ENCODE measurements at regions of chr7 and their contacts with region 1.

Region 1: DNA sequence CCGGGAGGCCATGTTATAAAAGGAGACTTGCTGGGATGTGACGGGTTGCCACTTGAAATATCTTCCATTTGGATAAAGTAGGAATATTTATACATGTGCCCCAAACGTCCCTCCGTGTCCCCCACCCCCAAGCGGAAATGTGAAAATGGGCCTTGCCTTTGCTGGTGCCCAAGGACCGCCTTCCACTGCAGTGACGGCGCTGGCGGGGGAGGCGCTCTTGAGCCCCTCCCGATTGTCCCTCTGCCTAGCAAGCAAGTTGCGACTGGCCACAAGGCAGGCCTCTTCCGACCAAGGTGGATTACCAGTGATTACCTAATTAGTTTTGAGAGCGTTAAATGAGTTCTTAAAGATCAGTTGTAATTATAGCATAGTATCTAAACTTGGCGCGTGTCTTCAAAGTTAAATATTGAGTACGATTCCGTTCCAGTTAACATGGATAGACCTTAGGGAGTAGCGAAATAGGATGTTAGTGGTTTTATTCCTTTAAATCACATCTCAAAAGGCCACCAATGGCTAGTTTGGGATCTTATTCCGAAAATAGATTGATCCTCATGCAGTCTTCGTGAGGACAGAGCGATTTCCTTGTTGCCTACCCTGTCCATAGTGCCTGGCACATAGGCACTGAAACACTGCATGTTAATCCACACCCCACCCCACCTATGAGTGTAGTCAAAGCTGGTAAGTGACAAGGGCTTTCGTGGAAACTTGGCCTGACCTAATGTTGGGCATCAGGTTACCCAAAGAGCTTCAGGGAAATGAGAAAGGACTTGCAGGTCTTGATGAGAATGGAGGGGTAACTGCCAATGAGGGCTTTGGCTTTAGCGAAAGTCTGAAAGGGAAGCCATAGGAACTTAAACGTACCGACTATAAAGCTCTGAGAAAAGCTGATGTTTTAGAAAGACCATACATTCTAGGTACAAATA is 1.1 kb downstream of the PPIA start:
- DNase-seq: peak; percentile 81
- H3K4me3 Mint-ChIP-seq: peak overlapping the region; percentile 94
- H3K27ac Mint-ChIP-seq: peak overlapping the region; percentile 94
- H3K4me1 Mint-ChIP-seq: peaks cover 34% of the 10 kb centered on the region
- H3K27me3 Mint-ChIP-seq: no peaks in the 10 kb centered on the region

Region 2: GRCh38 chr7:44123190-44124003 is 674.2 kb before region 1 on chr7 and contains the start of gene POLD2:
- intact Hi-C with region 1: loop called (anchors 2 kb)
- DNase-seq: peak; percentile 98
- H3K4me3 Mint-ChIP-seq: peak within 1 kb of the TSS; percentile 96
- H3K27ac Mint-ChIP-seq: peak within 1 kb of the TSS; percentile 90
- H3K4me1 Mint-ChIP-seq: peaks cover 31% of the 10 kb centered on the region
- H3K27me3 Mint-ChIP-seq: peaks cover 7% of the 10 kb centered on the region
- total RNA-seq, gene POLD2: 234 and 250 TPM in 2 replicates

Region 3: DNA sequence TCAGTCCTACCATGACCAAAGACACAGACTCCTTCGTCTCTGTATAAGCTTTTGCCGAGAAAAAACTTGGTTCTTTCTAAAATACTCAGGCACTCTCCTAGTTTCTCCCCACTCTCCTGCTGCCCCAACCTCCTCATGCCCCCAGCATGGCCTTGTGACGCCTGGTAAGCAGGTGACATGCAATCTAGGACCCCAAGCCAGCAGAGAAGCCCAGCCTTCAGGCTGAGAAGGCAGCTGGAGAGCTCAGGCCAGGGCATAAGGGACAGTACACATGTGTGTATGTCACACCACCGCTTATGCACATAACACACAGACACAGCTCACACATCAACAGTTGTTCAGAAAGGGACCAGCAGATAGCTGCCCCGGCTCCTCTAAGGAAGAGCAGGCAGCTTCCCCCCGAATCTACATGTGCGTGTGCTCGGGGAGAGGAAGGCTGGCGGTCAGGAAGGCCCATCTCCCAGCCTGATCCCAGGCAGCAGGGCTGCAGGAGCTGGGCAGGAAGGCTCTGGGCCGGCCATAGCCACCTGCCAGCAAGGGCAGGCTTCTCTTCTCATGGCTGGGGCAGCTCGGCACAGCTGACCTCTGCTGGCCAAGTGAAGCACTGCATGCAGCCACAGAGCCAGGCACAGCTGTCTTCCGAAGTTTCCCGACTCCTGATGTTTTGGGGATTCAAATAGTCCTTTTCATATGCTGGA is 232.3 kb before region 1 on chr7:
- intact Hi-C with region 1: no loop called
- DNase-seq: peak; percentile 45
- H3K4me3 Mint-ChIP-seq: no peak overlapping the region
- H3K27ac Mint-ChIP-seq: no peak overlapping the region
- H3K4me1 Mint-ChIP-seq: no peaks in the 10 kb centered on the region
- H3K27me3 Mint-ChIP-seq: no peaks in the 10 kb centered on the region

Region 4: DNA sequence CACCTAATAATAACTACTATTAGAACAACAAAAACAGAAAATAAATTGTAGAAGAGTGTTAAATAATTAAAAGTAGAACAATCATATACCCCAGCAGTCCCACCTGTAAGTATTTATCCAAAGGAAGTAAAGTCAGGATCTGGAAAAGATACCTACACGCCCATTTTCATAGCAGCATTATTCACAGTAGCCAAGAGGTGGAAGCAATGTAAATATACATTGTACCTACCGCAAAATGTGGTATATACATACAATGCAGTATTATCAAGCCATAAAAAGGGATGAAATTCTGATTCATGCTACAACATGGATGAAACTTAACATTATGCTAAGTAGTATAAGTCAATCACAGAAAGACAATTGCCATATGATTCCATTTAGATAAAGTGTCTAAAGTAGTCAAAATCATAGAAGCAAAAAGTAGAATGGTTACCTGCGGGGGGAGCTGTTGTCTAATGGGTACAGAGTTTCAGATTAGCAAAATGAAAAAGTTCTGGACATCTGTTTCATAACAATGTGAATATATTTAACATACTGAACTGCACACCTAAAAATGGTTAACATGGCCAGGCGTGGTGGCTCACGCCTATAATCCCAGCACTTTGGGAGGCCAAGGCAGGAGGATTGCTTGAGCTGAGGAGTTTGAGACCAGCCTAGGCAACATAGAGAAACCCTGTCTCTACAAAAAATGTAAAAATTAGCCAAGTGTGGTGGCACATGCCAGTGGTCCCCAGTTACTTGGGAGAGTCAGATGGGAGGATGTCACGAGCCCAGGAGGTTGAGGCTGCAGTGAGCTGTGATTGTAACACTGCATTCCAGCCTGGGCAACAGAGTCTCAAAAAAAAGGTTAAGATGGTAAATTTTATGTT is 209.5 kb before region 1 on chr7:
- intact Hi-C with region 1: loop called (anchors 1 kb)
- DNase-seq: peak; percentile 42
- H3K4me3 Mint-ChIP-seq: no peak overlapping the region
- H3K27ac Mint-ChIP-seq: no peak overlapping the region
- H3K4me1 Mint-ChIP-seq: peaks cover 10% of the 10 kb centered on the region
- H3K27me3 Mint-ChIP-seq: peaks cover 3% of the 10 kb centered on the region

Region 5: DNA sequence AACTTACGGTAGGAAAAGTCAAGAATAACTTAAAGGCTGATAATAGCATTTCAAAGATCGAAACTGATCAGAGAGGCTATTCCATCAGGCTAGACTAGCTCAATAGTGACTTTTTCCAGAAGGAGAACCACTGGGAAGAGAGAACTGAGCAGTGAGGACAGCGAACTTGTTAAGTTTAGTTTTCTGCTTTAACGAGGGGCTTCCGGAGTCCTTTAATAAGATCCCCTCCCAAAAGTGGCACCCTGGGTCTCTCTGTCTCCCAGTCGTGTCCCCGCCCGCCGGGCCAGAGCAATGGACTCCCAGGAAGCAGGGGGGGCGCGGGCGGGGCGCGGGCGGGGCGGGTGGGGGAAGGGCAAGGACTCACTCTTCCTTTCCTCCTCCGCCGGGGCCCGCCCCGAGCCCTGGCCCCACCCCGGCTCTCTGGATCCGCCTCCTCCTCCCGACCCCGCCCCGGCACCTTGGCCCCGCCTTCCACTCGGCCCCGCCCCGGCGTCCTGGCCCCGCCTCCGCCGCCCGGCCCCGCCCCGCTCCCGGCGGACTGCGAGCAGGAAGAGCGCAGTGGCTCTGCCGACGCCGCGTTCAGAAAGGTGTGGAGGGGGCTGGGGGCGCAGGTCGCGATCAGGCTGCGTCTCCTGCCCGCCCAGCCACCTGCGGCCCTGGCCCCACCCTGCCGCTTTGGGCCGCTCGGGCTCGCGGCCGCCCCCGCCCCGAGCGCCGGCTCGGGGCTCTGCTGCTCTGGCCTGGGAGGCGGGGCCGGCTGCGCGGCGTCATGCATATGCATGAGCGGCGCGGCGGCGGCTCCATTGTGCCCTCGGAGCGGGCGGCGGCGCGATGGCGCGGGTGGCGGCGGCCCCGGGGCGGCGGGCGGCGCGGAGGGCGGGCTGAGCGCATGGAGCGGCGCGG is 49.3 kb before region 1 on chr7 and contains the start of gene ZMIZ2:
- intact Hi-C with region 1: loop called (anchors 1 kb)
- DNase-seq: peak; percentile 88
- H3K4me3 Mint-ChIP-seq: peak within 1 kb of the TSS; percentile 92
- H3K27ac Mint-ChIP-seq: peak within 1 kb of the TSS; percentile 95
- H3K4me1 Mint-ChIP-seq: peaks cover 45% of the 10 kb centered on the region
- H3K27me3 Mint-ChIP-seq: no peaks in the 10 kb centered on the region
- total RNA-seq, gene ZMIZ2: 123 and 129 TPM in 2 replicates

Region 6: GRCh38 chr7:44811086-44811485 is 13.5 kb after region 1 on chr7:
- intact Hi-C with region 1: no loop called
- DNase-seq: no peak
- H3K4me3 Mint-ChIP-seq: no peak overlapping the region
- H3K27ac Mint-ChIP-seq: no peak overlapping the region
- H3K4me1 Mint-ChIP-seq: no peaks in the 10 kb centered on the region
- H3K27me3 Mint-ChIP-seq: no peaks in the 10 kb centered on the region

Region 7: GRCh38 chr7:44914992-44915607 is 117.5 kb after region 1 on chr7:
- intact Hi-C with region 1: loop called (anchors 1 kb)
- DNase-seq: peak; percentile 78
- H3K4me3 Mint-ChIP-seq: peak overlapping the region; percentile 67
- H3K27ac Mint-ChIP-seq: peak overlapping the region; percentile 85
- H3K4me1 Mint-ChIP-seq: peaks cover 16% of the 10 kb centered on the region
- H3K27me3 Mint-ChIP-seq: peaks cover 2% of the 10 kb centered on the region

Region 8: GRCh38 chr7:44999245-45000095 is 201.9 kb after region 1 on chr7:
- intact Hi-C with region 1: loop called (anchors 1 kb)
- DNase-seq: peak; percentile 99
- H3K4me3 Mint-ChIP-seq: peak overlapping the region; percentile 88
- H3K27ac Mint-ChIP-seq: peak overlapping the region; percentile 91
- H3K4me1 Mint-ChIP-seq: peaks cover 58% of the 10 kb centered on the region
- H3K27me3 Mint-ChIP-seq: no peaks in the 10 kb centered on the region

Measured in activated T-helper 1 cell treated with anti-CD3 and anti-CD28 coated beads, Interleukin-12 subunit alpha, Interleukin-12 subunit beta, Interleukin-2, Interleukin-4 antibody, amounts not matched to agents 30 ng/mL and 10 ng/mL and 1 ng/mL, durations not matched to agents 14 hours and 24 hours and 36 hours (primary cell).